ENCODE measurements at regions of chr19 and their contacts with region 1.

Region 1: GRCh38 chr19:44954824-44955586 is at the start of gene CLPTM1:
- DNase-seq: peak; percentile 93 to 98 (median 96)
- ATAC-seq: peak; percentile 91
- H3K4me3 ChIP-seq: peak within 1 kb of the TSS; percentile 72 to 88
- H3K4me3 Mint-ChIP-seq: peak within 1 kb of the TSS; percentile 97
- H3K27ac ChIP-seq: peak within 1 kb of the TSS; percentile 76 to 92
- H3K27ac Mint-ChIP-seq: peak within 1 kb of the TSS; percentile 97
- H3K4me1 ChIP-seq: peaks cover 31% of the 10 kb centered on the region
- H3K4me1 Mint-ChIP-seq: peaks cover 56% of the 10 kb centered on the region
- H3K27me3 ChIP-seq: no peaks in the 10 kb centered on the region
- H3K27me3 Mint-ChIP-seq: no peaks in the 10 kb centered on the region
- CTCF ChIP-seq: no peak
- total RNA-seq, gene CLPTM1: 108 to 113 TPM

Region 2: DNA sequence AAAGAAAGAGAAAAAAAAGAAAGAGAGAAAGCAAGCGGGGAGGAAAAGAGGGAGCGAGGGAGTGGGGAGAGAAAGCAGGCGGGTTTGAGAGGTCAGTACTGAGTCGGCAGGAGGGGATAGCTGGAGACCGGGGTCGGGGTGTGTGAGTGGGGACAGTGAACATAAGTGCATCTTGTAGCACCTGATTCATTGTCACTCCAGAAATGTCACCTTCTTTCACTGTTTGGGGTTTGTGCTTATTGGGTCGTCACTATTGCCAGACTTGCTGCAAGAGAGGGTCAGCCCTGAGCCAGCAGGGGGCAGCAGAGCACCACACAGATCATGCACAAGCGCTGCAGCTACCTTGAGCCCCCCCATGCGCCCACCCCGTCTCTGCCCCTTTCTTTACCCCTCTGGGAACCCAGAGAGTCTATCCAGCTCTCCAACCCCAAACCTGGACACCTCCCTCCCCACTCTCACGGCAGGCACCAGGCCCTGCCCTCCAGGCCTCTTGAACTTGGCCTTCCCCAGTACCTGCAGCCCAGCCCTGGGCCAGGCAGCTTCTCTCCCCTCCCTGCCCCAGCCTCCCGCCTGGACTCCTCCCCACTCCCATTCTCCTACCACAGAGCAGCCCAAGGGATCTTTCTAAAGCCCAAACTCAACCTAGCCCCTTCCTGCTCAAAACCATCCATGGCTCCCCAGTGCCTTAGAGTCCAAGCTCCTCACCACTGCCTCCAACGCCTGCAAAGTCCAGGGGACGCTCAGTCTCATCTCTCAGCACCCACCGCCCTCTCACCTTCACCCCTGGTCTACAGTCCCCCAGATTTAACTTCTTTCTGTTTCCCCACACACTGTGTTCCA is 265.7 kb before region 1 on chr19:
- CTCF ChIA-PET with region 1: no interaction called
- POLR2A ChIA-PET with region 1: no interaction called
- intact Hi-C with region 1: loop called (anchors 2 to 5 kb)
- DNase-seq: peak; percentile 64 to 87 (median 81)
- ATAC-seq: peak; percentile 59
- H3K4me3 ChIP-seq: no peak overlapping the region
- H3K4me3 Mint-ChIP-seq: no peak overlapping the region
- H3K27ac ChIP-seq: no peak overlapping the region
- H3K27ac Mint-ChIP-seq: no peak overlapping the region
- H3K4me1 ChIP-seq: peaks cover 25% of the 10 kb centered on the region
- H3K4me1 Mint-ChIP-seq: peaks cover 22% of the 10 kb centered on the region
- H3K27me3 ChIP-seq: peaks cover 0 to 4% of the 10 kb centered on the region in 2 experiments
- H3K27me3 Mint-ChIP-seq: peaks cover 16% of the 10 kb centered on the region
- CTCF ChIP-seq: peak; percentile 81

Region 3: GRCh38 chr19:44903602-44904425 is 51.2 kb before region 1 on chr19:
- CTCF ChIA-PET with region 1: interaction called, 15 read pairs
- POLR2A ChIA-PET with region 1: no interaction called
- intact Hi-C with region 1: loop called (anchors 1 kb)
- DNase-seq: peak; percentile 55 to 85 (median 71)
- ATAC-seq: peak; percentile 73
- H3K4me3 ChIP-seq: no peak overlapping the region
- H3K4me3 Mint-ChIP-seq: no peak overlapping the region
- H3K27ac ChIP-seq: no peak overlapping the region
- H3K27ac Mint-ChIP-seq: no peak overlapping the region
- H3K4me1 ChIP-seq: peaks cover 12% of the 10 kb centered on the region
- H3K4me1 Mint-ChIP-seq: peaks cover 12% of the 10 kb centered on the region
- H3K27me3 ChIP-seq: peaks cover 7 to 25% of the 10 kb centered on the region in 2 experiments
- H3K27me3 Mint-ChIP-seq: peaks cover 23% of the 10 kb centered on the region
- CTCF ChIP-seq: peak; percentile 94

Region 4: DNA sequence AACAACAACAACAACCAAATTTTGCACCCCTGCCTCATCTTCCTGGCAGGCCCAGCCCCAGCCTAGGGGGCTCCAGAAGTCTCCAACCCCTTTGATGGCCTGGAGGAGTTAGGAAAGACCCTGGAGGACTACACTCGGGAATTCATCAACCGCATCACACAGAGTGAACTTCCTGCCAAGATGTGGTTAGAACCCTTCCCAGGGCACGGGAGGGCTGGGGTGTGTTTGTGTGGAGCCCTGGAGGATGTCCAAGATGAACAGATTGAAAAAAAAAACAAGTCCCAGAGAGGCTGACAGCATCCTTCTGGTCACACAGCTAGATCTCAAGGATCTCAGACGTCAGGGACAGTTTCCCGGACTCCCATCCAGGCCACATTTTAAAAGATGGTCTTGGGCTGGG is 27.3 kb before region 1 on chr19:
- CTCF ChIA-PET with region 1: interaction called, 3 read pairs
- POLR2A ChIA-PET with region 1: no interaction called
- intact Hi-C with region 1: loop called in 1 of 2 experiments (anchors 1 kb)
- DNase-seq: no peak
- ATAC-seq: no peak
- H3K4me3 ChIP-seq: no peak overlapping the region
- H3K4me3 Mint-ChIP-seq: no peak overlapping the region
- H3K27ac ChIP-seq: no peak overlapping the region
- H3K27ac Mint-ChIP-seq: no peak overlapping the region
- H3K4me1 ChIP-seq: peaks cover 5% of the 10 kb centered on the region
- H3K4me1 Mint-ChIP-seq: peaks cover 6% of the 10 kb centered on the region
- H3K27me3 ChIP-seq: peaks cover 0 to 5% of the 10 kb centered on the region in 2 experiments
- H3K27me3 Mint-ChIP-seq: peaks cover 30% of the 10 kb centered on the region
- CTCF ChIP-seq: no peak

Region 5: DNA sequence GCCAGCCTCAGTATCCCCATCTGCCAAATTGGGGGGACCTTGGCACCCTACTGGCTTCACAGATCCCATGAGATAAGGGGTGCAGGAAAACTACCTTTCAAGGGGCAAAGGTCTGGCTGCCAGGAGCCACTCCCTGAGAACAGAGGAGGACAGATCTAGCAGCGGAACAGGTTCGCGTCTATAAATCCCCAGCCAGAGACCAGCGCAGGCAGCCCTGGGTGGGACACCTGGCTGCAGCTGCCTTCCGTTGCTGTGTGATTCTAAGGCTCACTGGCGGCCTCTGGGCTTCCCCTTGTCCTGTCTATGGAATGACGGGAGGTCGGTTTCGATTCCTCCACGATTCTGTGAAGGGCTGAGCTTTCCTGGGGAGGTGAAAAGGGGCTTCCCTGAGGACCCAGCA is 53.5 kb after region 1 on chr19:
- CTCF ChIA-PET with region 1: no interaction called
- POLR2A ChIA-PET with region 1: no interaction called
- intact Hi-C with region 1: no loop called
- DNase-seq: peak in 1 of 9 experiments; percentile 15
- ATAC-seq: no peak
- H3K4me3 ChIP-seq: no peak overlapping the region
- H3K4me3 Mint-ChIP-seq: no peak overlapping the region
- H3K27ac ChIP-seq: no peak overlapping the region
- H3K27ac Mint-ChIP-seq: no peak overlapping the region
- H3K4me1 ChIP-seq: no peaks in the 10 kb centered on the region
- H3K4me1 Mint-ChIP-seq: peaks cover 3% of the 10 kb centered on the region
- H3K27me3 ChIP-seq: no peaks in the 10 kb centered on the region
- H3K27me3 Mint-ChIP-seq: no peaks in the 10 kb centered on the region
- CTCF ChIP-seq: no peak

Region 6: GRCh38 chr19:45038931-45039893 is 84.2 kb after region 1 on chr19 and contains the start of gene CLASRP:
- CTCF ChIA-PET with region 1: no interaction called
- POLR2A ChIA-PET with region 1: interaction called, 3 read pairs
- intact Hi-C with region 1: loop called (anchors 1 to 2 kb)
- DNase-seq: peak; percentile 73 to 94 (median 89)
- ATAC-seq: peak; percentile 89
- H3K4me3 ChIP-seq: peak within 1 kb of the TSS; percentile 86 to 89
- H3K4me3 Mint-ChIP-seq: peak within 1 kb of the TSS; percentile 93
- H3K27ac ChIP-seq: peak within 1 kb of the TSS; percentile 92 to 96
- H3K27ac Mint-ChIP-seq: peak within 1 kb of the TSS; percentile 90
- H3K4me1 ChIP-seq: peaks cover 23% of the 10 kb centered on the region
- H3K4me1 Mint-ChIP-seq: peaks cover 32% of the 10 kb centered on the region
- H3K27me3 ChIP-seq: no peaks in the 10 kb centered on the region
- H3K27me3 Mint-ChIP-seq: no peaks in the 10 kb centered on the region
- CTCF ChIP-seq: no peak
- total RNA-seq, gene CLASRP: 144 to 153 TPM

Region 7: DNA sequence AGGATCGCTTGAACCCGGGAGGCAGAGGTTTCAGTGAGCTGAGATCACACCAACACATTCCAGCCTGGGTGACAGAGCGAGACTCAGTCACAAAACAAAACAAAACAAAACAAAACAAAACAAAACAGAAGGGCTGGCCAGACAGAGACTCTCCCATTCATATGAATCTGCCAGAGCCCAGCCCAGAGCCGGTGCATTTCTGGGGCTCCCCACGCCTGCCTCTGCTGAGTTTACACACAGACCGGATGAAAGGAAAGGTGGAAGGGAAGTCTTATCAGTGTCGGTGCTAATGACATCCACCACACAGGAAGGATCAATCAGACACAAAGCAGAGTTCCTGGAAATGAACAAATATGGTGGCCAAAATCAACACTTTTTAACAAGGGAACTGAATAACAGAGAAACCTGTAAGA is 216.2 kb after region 1 on chr19:
- CTCF ChIA-PET with region 1: no interaction called
- POLR2A ChIA-PET with region 1: no interaction called
- intact Hi-C with region 1: no loop called
- DNase-seq: peak in 5 of 9 experiments; percentile 30 to 76 (median 41)
- ATAC-seq: peak; percentile 76
- H3K4me3 ChIP-seq: peak overlapping the region in 1 of 2 experiments; percentile 4
- H3K4me3 Mint-ChIP-seq: peak overlapping the region; percentile 78
- H3K27ac ChIP-seq: peak overlapping the region; percentile 29 to 63
- H3K27ac Mint-ChIP-seq: peak overlapping the region; percentile 91
- H3K4me1 ChIP-seq: peaks cover 38% of the 10 kb centered on the region
- H3K4me1 Mint-ChIP-seq: peaks cover 34% of the 10 kb centered on the region
- H3K27me3 ChIP-seq: no peaks in the 10 kb centered on the region
- H3K27me3 Mint-ChIP-seq: no peaks in the 10 kb centered on the region
- CTCF ChIP-seq: no peak